Calu3 (cell line): ENCODE measurements at regions of chrX and their contacts with region 1.

Region 1: DNA sequence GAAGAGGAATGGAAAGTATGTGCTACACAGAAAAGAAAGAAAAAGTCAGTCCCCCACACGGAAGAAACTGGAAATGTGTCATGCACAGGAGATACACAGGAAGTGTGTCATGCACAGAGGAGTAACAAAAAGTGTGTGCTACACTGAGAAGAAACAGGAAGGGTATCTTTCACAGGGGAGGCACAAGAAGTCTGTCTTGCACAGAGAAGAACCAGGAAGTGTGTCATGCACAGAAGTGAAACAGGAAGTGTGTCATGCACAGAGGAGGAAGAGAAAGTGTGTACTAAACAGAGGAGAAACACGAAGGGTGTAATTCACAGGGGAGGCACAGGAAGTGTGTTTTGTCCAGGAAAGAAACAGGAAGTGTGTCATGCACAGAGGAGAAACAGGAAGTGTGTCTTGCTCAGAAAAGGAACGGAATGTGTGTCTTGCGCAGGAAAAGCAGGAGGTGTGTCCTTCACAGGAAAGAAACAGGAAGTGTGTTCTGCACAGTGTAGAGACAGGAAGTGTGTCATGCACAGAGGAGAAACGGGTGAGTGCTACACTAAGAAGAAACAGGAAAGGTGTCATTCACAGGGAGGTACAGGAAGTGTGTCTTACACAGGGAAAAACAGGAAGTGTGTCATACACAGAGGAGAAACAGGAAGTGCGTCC is 527.2 kb upstream of the PRKX start:
- DNase-seq: no peak
- H3K4me3 Mint-ChIP-seq: no peak overlapping the region
- H3K27ac Mint-ChIP-seq: no peak overlapping the region
- H3K4me1 Mint-ChIP-seq: no peaks in the 10 kb centered on the region
- H3K27me3 Mint-ChIP-seq: no peaks in the 10 kb centered on the region
- CTCF ChIP-seq: no peak

Region 2: DNA sequence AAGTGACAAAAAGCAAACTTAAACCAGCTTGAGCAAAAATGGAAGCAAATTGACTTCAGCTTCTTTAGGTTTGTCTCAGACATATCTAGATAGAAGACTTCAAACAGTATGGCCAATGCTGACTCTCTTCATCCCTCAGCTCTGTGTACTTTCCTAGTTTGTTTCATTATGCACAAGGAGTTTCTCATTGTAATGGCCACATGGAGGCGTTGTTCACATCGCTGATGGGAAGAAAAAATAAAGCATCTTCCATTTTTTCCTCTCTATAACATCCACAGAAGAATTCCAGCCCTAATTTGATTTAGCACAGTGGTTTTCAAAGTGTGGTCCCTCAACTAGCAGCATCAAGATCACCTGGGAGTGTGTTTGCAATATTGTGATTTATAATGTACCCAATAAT is 129.7 kb before region 1 on chrX:
- CTCF ChIA-PET with region 1: no interaction called
- intact Hi-C with region 1: loop called (anchors 10 kb)
- DNase-seq: no peak
- H3K4me3 Mint-ChIP-seq: no peak overlapping the region
- H3K27ac Mint-ChIP-seq: no peak overlapping the region
- H3K4me1 Mint-ChIP-seq: no peaks in the 10 kb centered on the region
- H3K27me3 Mint-ChIP-seq: peaks cover 29% of the 10 kb centered on the region
- CTCF ChIP-seq: no peak

Region 3: DNA sequence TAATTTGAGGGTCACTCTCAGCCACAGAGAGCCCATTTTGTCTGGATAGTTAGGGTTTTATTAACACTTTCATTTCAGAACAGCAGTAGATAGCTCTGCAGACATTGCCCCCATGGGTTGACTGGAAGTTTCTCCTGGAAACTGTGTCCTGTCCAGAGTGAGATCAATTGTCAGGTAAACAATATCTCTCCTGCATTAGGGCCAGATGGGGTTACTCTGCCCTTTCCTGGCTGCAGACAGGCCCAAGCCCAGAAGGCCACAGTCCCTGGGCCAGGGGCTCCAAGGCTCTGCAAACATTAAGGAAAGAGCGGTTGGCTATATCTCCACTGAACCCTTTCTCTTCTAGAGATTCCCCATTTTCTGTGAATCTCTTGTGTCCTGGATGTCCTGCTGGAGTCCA is 90.4 kb before region 1 on chrX:
- CTCF ChIA-PET with region 1: no interaction called
- intact Hi-C with region 1: no loop called
- DNase-seq: no peak
- H3K4me3 Mint-ChIP-seq: no peak overlapping the region
- H3K27ac Mint-ChIP-seq: no peak overlapping the region
- H3K4me1 Mint-ChIP-seq: no peaks in the 10 kb centered on the region
- H3K27me3 Mint-ChIP-seq: no peaks in the 10 kb centered on the region
- CTCF ChIP-seq: no peak

Region 4: DNA sequence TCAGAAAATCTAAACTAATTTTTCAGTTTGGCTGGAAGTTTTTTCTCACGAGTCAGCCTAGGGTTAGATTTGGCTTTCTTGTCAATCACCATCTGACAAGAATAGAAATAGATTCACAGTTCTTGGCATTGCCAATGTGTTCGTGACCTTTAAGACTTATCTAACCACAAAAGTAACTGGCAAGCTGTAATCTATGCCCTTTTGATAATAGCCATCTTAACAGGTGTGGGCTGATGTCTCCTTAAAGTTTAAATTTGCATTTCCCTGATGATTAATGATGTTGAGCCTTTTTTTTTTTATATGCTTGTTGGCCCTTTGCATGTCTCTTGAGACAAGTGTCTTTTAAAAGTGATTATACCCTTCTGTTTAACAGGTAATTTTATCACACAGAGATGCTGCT is 66.9 kb before region 1 on chrX:
- CTCF ChIA-PET with region 1: no interaction called
- intact Hi-C with region 1: no loop called
- DNase-seq: no peak
- H3K4me3 Mint-ChIP-seq: no peak overlapping the region
- H3K27ac Mint-ChIP-seq: no peak overlapping the region
- H3K4me1 Mint-ChIP-seq: peaks cover 8% of the 10 kb centered on the region
- H3K27me3 Mint-ChIP-seq: no peaks in the 10 kb centered on the region
- CTCF ChIP-seq: no peak